ENCODE measurements at regions of chr14 and their contacts with region 1.

Region 1: GRCh38 chr14:102096214-102097114 is 9.6 kb upstream of the HSP90AA1 start:
- H3K4me3 ChIP-seq: no peak overlapping the region
- H3K27ac ChIP-seq: no peak overlapping the region
- H3K4me1 ChIP-seq: no peaks in the 10 kb centered on the region
- CTCF ChIP-seq: peak; percentile 45

Region 2: GRCh38 chr14:101947906-101948665 is 148.4 kb before region 1 on chr14:
- CTCF ChIA-PET with region 1: no interaction called
- POLR2A ChIA-PET with region 1: no interaction called
- H3K4me3 ChIP-seq: peak overlapping the region; percentile 90
- H3K27ac ChIP-seq: peak overlapping the region; percentile 96
- H3K4me1 ChIP-seq: 0 out of 2 replicates have a peak, but pooled peaks cover 3% of the 10 kb centered on the region
- CTCF ChIP-seq: no peak

Region 3: GRCh38 chr14:102046343-102047278 is 49.9 kb before region 1 on chr14:
- CTCF ChIA-PET with region 1: interaction called, 13 read pairs
- POLR2A ChIA-PET with region 1: no interaction called
- H3K4me3 ChIP-seq: no peak overlapping the region
- H3K27ac ChIP-seq: no peak overlapping the region
- H3K4me1 ChIP-seq: no peaks in the 10 kb centered on the region; the same call in 1 of the 2 replicates
- CTCF ChIP-seq: peak; percentile 96

Region 4: GRCh38 chr14:102063091-102063802 is 33.2 kb before region 1 on chr14:
- CTCF ChIA-PET with region 1: interaction called, 12 read pairs
- POLR2A ChIA-PET with region 1: no interaction called
- H3K4me3 ChIP-seq: no peak overlapping the region
- H3K27ac ChIP-seq: no peak overlapping the region
- H3K4me1 ChIP-seq: no peaks in the 10 kb centered on the region
- CTCF ChIP-seq: peak; percentile 39; the same call in 1 of the 2 replicates

Region 5: DNA sequence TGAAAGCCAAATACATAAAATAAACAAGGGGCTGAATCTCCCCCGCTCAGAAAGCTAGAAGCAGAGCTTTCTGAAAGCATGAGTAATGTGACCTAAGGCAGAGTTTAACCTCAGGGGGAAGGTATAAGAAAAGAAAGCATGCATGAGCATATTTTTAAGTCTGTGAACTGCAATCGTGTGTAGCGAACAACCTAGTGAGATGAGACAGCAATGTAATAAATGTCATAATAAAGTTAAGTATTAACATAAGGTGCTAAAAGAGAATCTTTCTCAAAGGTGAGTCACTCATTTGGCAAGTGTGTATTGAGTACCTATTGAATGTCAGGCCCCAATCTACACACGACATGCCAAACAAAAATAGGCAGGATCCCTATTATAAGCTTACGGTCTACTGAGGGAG is 29.1 kb after region 1 on chr14:
- CTCF ChIA-PET with region 1: interaction called, 11 read pairs
- POLR2A ChIA-PET with region 1: no interaction called
- H3K4me3 ChIP-seq: no peak overlapping the region
- H3K27ac ChIP-seq: no peak overlapping the region
- H3K4me1 ChIP-seq: peaks cover 11% of the 10 kb centered on the region; the same call in 1 of the 2 replicates
- CTCF ChIP-seq: no peak

Region 6: GRCh38 chr14:102182190-102182589 is 85.7 kb after region 1 on chr14:
- CTCF ChIA-PET with region 1: interaction called, 12 read pairs
- POLR2A ChIA-PET with region 1: no interaction called
- H3K4me3 ChIP-seq: no peak overlapping the region
- H3K27ac ChIP-seq: no peak overlapping the region
- H3K4me1 ChIP-seq: peaks cover 35% of the 10 kb centered on the region
- CTCF ChIP-seq: no peak

Region 7: GRCh38 chr14:102220031-102220430 is 123.6 kb after region 1 on chr14:
- CTCF ChIA-PET with region 1: no interaction called
- POLR2A ChIA-PET with region 1: no interaction called
- H3K4me3 ChIP-seq: no peak overlapping the region
- H3K27ac ChIP-seq: no peak overlapping the region
- H3K4me1 ChIP-seq: no peaks in the 10 kb centered on the region
- CTCF ChIP-seq: no peak

Region 8: GRCh38 chr14:102314242-102315011 is 218.0 kb after region 1 on chr14:
- CTCF ChIA-PET with region 1: interaction called, 12 read pairs
- POLR2A ChIA-PET with region 1: no interaction called
- H3K4me3 ChIP-seq: peak overlapping the region; percentile 64
- H3K27ac ChIP-seq: no peak overlapping the region; the same call in 1 of the 2 replicates
- H3K4me1 ChIP-seq: peaks cover 13% of the 10 kb centered on the region
- CTCF ChIP-seq: peak; percentile 99

Measured in HEK293 (cell line).